Endothelial cell of umbilical vein (primary cell): ENCODE measurements at regions of chr11 and their contacts with region 1.

Region 1: DNA sequence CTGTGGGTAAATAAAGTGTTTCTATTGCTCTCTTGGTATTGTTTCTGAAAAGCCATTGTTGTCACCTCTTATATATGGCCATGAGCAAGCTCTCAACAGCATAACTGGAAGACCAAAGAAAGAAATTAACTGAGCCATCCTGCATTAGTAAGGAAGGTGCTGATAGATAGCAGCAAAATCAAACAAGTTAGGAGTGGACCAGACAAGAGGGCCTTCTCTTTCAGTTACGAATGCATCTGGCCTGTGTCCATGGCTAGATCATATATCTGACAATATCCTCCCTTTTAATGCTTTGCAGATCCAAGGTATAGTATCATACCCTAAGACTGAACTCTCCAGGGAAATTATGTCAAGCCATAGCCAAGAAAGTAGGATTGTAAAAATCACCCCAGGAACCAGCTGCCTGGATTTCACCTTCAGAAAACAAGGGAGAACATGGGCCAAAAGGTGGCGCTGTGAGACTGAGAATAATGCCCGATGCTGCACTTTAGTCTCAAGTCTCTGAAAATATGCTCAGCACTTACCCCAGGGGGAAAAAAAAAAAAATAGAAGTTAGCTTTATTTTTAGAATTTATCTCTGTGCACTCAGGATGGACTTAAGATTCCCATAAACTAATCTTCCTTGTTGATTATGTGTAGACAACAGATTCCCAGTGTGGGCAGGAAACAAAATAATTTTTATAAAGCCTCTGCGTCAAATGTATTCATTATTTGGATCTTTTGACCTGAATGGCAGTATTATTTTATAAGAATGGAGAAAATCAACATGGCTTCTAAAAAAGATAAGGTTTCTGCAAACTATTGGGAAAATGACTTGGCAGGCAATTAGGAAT is 415.1 kb downstream of the ETS1 start:
- DNase-seq: peak; percentile 91
- H3K4me3 ChIP-seq: no peak overlapping the region
- H3K27ac ChIP-seq: peak overlapping the region; percentile 42
- H3K4me1 ChIP-seq: peaks cover 9% of the 10 kb centered on the region
- H3K27me3 ChIP-seq: no peaks in the 10 kb centered on the region
- CTCF ChIP-seq: peak; percentile 64 to 74
- POLR2A ChIP-seq: no peak

Region 2: DNA sequence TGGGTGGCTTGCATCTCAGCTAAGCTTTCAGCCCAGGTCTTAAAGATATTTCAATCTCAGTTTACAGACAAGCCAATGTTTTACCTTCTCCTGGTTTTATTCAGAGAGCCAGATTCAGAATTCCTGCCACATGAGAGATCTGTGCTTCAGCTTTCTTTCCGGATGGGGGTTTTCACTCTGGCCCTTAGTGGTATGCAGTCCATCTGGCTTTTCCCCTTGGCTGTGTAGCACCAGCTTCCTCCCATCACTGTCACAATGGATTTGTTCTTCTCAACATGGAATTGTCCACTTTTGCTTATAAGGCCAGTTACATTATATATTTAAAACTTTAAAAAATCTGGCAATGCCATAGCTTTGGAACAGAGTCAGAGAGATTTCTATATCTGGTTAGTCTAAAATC is 111.2 kb after region 1 on chr11:
- CTCF ChIA-PET with region 1: interaction called, 21 read pairs
- POLR2A ChIA-PET with region 1: no interaction called
- dilution Hi-C with region 1: no loop called
- intact Hi-C with region 1: no loop called
- DNase-seq: no peak
- H3K4me3 ChIP-seq: no peak overlapping the region
- H3K27ac ChIP-seq: no peak overlapping the region
- H3K4me1 ChIP-seq: no peaks in the 10 kb centered on the region
- H3K27me3 ChIP-seq: no peaks in the 10 kb centered on the region
- CTCF ChIP-seq: no peak
- POLR2A ChIP-seq: no peak

Region 3: GRCh38 chr11:128757235-128757711 is 585.0 kb after region 1 on chr11:
- CTCF ChIA-PET with region 1: interaction called, 6 read pairs
- POLR2A ChIA-PET with region 1: no interaction called
- dilution Hi-C with region 1: no loop called
- intact Hi-C with region 1: loop called (anchors 1 kb)
- DNase-seq: peak; percentile 75
- H3K4me3 ChIP-seq: no peak overlapping the region
- H3K27ac ChIP-seq: peak overlapping the region; percentile 21
- H3K4me1 ChIP-seq: peaks cover 19% of the 10 kb centered on the region
- H3K27me3 ChIP-seq: no peaks in the 10 kb centered on the region
- CTCF ChIP-seq: peak; percentile 55 to 61
- POLR2A ChIP-seq: no peak

Region 4: DNA sequence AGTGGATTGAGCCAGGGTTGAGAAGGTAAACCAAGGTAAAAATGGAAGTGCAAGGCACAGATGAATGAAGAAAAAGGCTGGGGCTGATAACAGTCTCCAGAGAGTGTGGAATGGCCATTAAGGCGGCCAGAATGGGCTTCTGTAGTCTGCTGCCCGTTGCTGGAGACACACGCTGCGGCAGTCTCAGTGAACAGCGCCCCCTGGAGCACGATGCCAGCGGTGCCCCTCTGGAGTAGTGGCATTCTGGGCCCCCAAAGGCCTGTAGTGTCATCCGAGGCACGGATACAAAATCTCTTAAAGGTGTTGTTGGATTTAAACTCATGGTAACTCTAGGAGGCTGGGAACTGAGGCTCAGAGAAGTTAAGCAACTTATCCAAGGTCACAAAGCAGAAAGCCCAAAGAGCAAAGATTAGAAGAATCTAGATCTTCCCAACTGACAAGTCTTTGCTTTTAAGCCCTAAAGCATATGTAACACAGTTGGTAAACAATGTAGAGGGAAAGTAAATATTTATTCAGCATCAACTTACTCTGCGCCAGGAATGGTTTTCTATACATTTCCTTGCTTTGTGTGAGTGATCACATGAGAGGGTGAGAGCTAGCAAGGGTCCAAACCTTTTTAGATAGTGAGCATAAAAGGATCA is 676.7 kb after region 1 on chr11:
- CTCF ChIA-PET with region 1: interaction called, 12 read pairs
- POLR2A ChIA-PET with region 1: no interaction called
- dilution Hi-C with region 1: no loop called
- intact Hi-C with region 1: loop called (anchors 1 kb)
- DNase-seq: peak; percentile 72
- H3K4me3 ChIP-seq: no peak overlapping the region
- H3K27ac ChIP-seq: no peak overlapping the region
- H3K4me1 ChIP-seq: peaks cover 4% of the 10 kb centered on the region
- H3K27me3 ChIP-seq: no peaks in the 10 kb centered on the region
- CTCF ChIP-seq: peak; percentile 94 to 97
- POLR2A ChIP-seq: no peak